Natural killer cell (primary cell): ENCODE measurements at regions of chr5 and their contacts with region 1.

Region 1: GRCh38 chr5:97183100-97183929 is at the start of gene RIOK2:
- DNase-seq: peak; percentile 81 to 96
- ATAC-seq: peak; percentile 91 to 97 (median 91)
- H3K4me3 ChIP-seq: peak within 1 kb of the TSS; percentile 57
- H3K4me3 Mint-ChIP-seq: peak within 1 kb of the TSS; percentile 95
- H3K27ac ChIP-seq: peak within 1 kb of the TSS; percentile 91
- H3K27ac Mint-ChIP-seq: peak within 1 kb of the TSS; percentile 98 to 99
- H3K4me1 ChIP-seq: peaks cover 10% of the 10 kb centered on the region
- H3K4me1 Mint-ChIP-seq: peaks cover 33 to 37% of the 10 kb centered on the region in 2 donors
- H3K27me3 ChIP-seq: no peaks in the 10 kb centered on the region
- H3K27me3 Mint-ChIP-seq: peaks cover 12 to 14% of the 10 kb centered on the region in 2 donors
- CTCF ChIP-seq: no peak
- total RNA-seq, gene RIOK2: 26.3 to 31.0 (median 28.2) TPM

Region 2: DNA sequence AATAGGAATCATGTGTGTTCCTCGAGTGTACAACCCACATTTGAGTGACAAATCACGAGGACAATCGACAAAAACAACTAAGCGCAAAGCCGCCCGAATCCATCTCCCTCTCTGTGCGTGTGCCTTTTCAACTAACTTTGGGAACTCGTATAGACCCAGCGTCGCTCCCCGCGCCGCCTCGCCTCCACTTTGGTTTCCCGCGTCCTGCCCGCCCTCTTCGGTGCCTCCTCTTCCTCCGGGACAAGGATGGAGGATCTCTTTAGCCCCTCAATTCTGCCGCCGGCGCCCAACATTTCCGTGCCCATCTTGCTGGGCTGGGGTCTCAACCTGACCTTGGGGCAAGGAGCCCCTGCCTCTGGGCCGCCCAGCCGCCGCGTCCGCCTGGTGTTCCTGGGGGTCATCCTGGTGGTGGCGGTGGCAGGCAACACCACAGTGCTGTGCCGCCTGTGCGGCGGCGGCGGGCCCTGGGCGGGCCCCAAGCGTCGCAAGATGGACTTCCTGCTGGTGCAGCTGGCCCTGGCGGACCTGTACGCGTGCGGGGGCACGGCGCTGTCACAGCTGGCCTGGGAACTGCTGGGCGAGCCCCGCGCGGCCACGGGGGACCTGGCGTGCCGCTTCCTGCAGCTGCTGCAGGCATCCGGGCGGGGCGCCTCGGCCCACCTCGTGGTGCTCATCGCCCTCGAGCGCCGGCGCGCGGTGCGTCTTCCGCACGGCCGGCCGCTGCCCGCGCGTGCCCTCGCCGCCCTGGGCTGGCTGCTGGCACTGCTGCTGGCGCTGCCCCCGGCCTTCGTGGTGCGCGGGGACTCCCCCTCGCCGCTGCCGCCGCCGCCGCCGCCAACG is 1563.1 kb before region 1 on chr5 and contains the start of gene GPR150:
- intact Hi-C with region 1: loop called (anchors 10 kb)
- DNase-seq: peak; percentile 57 to 80
- ATAC-seq: peak; percentile 79 to 83 (median 81)
- H3K4me3 ChIP-seq: peak within 1 kb of the TSS; percentile 66
- H3K4me3 Mint-ChIP-seq: peak within 1 kb of the TSS; percentile 94
- H3K27ac ChIP-seq: no peak within 1 kb of the TSS
- H3K27ac Mint-ChIP-seq: peak within 1 kb of the TSS; percentile 71 to 78
- H3K4me1 ChIP-seq: peaks cover 20% of the 10 kb centered on the region
- H3K4me1 Mint-ChIP-seq: peaks cover 32 to 36% of the 10 kb centered on the region in 2 donors
- H3K27me3 ChIP-seq: no peaks in the 10 kb centered on the region
- H3K27me3 Mint-ChIP-seq: no peaks in the 10 kb centered on the region
- CTCF ChIP-seq: no peak
- total RNA-seq, gene GPR150: 0.63 to 0.97 (median 0.89) TPM

Region 3: GRCh38 chr5:98773464-98774191 is 1590.3 kb after region 1 on chr5 and contains the start of gene RGMB:
- intact Hi-C with region 1: loop called (anchors 5 kb)
- DNase-seq: peak; percentile 57 to 92
- ATAC-seq: peak; percentile 78 to 86 (median 84)
- H3K4me3 ChIP-seq: peak within 1 kb of the TSS; percentile 57
- H3K4me3 Mint-ChIP-seq: peak within 1 kb of the TSS; percentile 94
- H3K27ac ChIP-seq: no peak within 1 kb of the TSS
- H3K27ac Mint-ChIP-seq: peak within 1 kb of the TSS; percentile 44 to 53
- H3K4me1 ChIP-seq: peaks cover 47% of the 10 kb centered on the region
- H3K4me1 Mint-ChIP-seq: peaks cover 48 to 61% of the 10 kb centered on the region in 2 donors
- H3K27me3 ChIP-seq: peaks cover 55% of the 10 kb centered on the region
- H3K27me3 Mint-ChIP-seq: peaks cover 47 to 78% of the 10 kb centered on the region in 2 donors
- CTCF ChIP-seq: no peak
- total RNA-seq, gene RGMB: 0.35 to 1.5 (median 0.86) TPM